PC-9 (cell line): ENCODE measurements at regions of chr12 and their contacts with region 1.

Region 1: DNA sequence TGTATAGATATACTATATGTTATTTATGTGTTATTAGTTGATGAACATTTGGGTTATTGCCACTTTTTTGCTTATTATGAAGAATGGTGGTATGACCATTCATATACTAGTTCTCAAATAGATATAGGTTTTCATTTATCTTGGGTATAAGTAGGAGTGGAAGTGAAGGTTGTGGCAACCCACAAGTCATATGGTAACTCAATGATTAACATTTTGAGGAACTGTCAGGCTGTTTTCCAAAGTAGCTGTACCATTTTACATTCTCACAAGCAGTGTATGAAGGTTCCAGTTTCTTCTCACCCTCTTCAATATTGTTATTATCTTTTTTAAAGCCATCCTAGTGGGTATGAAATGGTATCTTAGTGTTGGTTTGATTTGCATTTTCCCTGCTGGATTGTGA is 19.0 kb upstream of the MSRB3 start:
- DNase-seq: no peak
- H3K4me3 ChIP-seq: no peak overlapping the region
- H3K27ac ChIP-seq: no peak overlapping the region
- H3K4me1 ChIP-seq: no peaks in the 10 kb centered on the region
- H3K27me3 ChIP-seq: no peaks in the 10 kb centered on the region
- CTCF ChIP-seq: no peak

Region 2: GRCh38 chr12:65217086-65217485 is 42.4 kb before region 1 on chr12:
- CTCF ChIA-PET with region 1: interaction called, 13 read pairs
- POLR2A ChIA-PET with region 1: no interaction called
- intact Hi-C with region 1: no loop called
- DNase-seq: no peak
- H3K4me3 ChIP-seq: no peak overlapping the region
- H3K27ac ChIP-seq: no peak overlapping the region
- H3K4me1 ChIP-seq: no peaks in the 10 kb centered on the region
- H3K27me3 ChIP-seq: no peaks in the 10 kb centered on the region
- CTCF ChIP-seq: no peak